Tibial artery (tissue), 4 donors: ENCODE measurements at regions of chr19 and their contacts with region 1.

Region 1: DNA sequence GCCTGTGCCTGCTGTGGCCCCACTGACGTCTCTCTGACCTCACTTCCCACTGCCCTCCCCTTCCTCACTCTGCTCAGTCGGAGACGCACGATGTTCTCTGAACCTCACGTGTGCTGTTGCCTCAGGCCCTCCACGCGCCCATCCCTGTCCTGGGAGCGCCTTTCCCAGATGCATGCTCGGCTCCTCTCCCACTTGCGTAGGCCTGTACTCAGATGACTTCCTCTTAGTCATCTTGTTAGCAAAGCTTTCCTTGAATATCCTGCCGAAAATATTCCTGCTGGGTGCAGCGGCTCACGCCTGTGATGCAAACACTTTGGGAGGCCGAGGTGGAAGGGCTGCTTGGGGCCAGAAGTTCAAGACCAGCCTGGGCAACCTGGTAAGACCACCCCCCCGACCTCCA is 9.3 kb upstream of the SYT5 start:
- DNase-seq: peak in 1 of 2 donors; percentile 25
- H3K4me3 ChIP-seq: no peak overlapping the region
- H3K27ac ChIP-seq: no peak overlapping the region
- H3K4me1 ChIP-seq: no peaks in the 10 kb centered on the region
- H3K27me3 ChIP-seq: peaks cover 0 to 18% of the 10 kb centered on the region in 2 donors
- CTCF ChIP-seq: no peak

Region 2: DNA sequence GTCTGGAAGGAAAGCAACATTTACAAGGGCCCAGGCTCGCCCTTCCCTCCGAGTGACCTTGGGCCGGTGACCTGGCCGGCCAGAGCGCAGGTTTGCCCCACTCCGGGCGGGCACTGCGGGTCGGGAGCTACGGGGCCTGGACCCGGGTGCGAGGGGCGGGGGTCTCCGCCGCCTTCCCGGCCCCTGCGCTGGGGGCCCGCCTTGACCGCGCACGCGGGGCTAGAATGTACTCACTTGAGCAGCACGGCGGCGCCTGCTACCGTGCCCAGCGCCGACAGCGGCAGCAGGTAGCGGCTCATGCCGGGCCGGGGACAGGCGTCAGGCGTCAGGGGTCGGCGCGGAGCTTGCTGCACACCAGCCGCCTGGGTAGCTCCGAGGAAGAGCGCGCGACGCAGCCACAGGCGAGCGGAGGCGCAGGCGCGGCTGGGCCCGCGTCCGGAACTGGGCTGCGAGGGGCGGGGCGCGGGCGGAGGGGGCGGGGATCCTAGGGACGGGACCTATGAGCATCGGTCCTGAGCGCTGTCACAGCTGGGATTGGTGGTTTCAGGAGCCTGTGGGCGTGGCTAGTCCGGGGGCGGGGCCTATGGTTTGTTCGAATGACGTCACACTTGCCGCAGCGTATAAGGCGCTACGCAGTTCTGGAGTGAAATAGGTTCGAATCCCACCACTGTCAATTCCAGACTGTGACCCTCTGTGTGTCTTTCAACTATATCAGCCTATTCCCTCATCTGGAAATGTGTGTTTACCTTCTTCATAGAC is 126.5 kb before region 1 on chr19 and contains the start of gene RDH13:
- intact Hi-C with region 1: no loop called
- DNase-seq: peak; percentile 96 to 97
- H3K4me3 ChIP-seq: peak within 1 kb of the TSS; percentile 83 to 85
- H3K27ac ChIP-seq: peak within 1 kb of the TSS; percentile 72 to 85
- H3K4me1 ChIP-seq: peaks cover 0 to 9% (median 6%) of the 10 kb centered on the region in 4 donors
- H3K27me3 ChIP-seq: no peaks in the 10 kb centered on the region
- CTCF ChIP-seq: no peak

Region 3: GRCh38 chr19:55146078-55146704 is 43.2 kb before region 1 on chr19:
- intact Hi-C with region 1: no loop called
- DNase-seq: no peak
- H3K4me3 ChIP-seq: no peak overlapping the region
- H3K27ac ChIP-seq: no peak overlapping the region
- H3K4me1 ChIP-seq: peaks cover 0 to 18% (median 4%) of the 10 kb centered on the region in 4 donors
- H3K27me3 ChIP-seq: peaks cover 7 to 95% of the 10 kb centered on the region in 2 donors
- CTCF ChIP-seq: no peak

Region 4: DNA sequence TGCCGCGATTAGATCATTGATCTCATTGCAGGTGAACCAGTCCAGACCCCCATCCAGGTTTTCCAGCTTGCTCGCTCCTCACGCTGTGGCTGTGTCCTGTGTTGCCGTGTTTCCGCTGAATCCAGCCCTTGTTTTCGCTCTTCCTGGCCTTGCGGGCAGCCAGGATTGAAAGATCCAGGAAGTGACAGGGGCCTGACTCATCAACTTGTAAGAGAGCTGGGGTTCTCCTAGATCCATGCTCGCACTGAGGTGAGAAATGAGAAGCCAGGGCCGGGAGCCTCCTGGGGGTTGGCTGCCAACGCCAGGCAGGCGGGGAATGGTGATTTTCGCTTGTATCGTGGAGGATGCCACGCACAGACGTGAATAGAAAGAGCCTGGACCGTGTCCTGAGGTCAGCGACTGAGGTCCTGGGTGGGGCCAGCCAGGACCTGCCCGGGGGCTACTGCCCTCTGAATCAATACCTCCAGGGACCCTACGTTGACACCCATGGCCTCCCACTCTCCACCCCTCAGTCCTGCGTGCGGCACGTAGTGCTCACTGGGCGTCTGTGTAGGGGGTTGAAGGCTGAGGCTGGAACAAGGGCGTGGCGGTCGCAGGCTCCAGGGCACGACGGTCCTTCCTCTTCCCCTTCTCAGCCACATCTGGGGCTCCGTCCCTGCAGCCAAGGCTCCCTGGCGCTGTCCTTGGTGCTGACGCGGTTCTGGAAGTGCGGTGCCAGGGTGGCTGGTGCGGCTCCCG is 27.2 kb after region 1 on chr19:
- intact Hi-C with region 1: loop called (anchors 1 kb)
- DNase-seq: peak in 1 of 2 donors; percentile 69
- H3K4me3 ChIP-seq: peak overlapping the region; percentile 27 to 36
- H3K27ac ChIP-seq: no peak overlapping the region
- H3K4me1 ChIP-seq: peaks cover 0 to 10% (median 2%) of the 10 kb centered on the region in 4 donors
- H3K27me3 ChIP-seq: peaks cover 0 to 14% of the 10 kb centered on the region in 2 donors
- CTCF ChIP-seq: no peak